MCF 10A (cell line): ENCODE measurements at regions of chr11 and their contacts with region 1.

Region 1: DNA sequence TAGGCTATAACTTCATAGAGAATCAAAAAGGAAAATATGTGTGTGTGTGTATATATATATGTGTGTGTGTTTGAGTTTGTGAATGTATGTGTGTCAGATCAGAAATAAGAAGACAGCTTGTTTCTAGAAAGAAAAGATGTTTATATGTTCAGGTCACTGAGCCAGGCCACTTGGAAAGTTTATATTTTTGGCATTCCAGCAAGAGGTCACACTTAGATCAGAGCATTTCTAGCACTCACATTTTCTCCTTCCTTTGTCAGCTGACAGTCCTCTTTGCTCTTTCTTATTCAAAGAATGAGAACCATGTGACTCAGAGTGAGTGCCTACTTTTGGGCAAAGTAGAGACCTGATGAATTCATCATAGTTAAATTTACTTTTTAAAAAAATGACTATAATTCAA is 22.9 kb downstream of the RAB38 start:
- DNase-seq: no peak
- H3K4me3 Mint-ChIP-seq: no peak overlapping the region
- H3K27ac Mint-ChIP-seq: no peak overlapping the region
- H3K4me1 Mint-ChIP-seq: peaks cover 23% of the 10 kb centered on the region
- H3K27me3 Mint-ChIP-seq: no peaks in the 10 kb centered on the region
- CTCF ChIP-seq: no peak

Region 2: DNA sequence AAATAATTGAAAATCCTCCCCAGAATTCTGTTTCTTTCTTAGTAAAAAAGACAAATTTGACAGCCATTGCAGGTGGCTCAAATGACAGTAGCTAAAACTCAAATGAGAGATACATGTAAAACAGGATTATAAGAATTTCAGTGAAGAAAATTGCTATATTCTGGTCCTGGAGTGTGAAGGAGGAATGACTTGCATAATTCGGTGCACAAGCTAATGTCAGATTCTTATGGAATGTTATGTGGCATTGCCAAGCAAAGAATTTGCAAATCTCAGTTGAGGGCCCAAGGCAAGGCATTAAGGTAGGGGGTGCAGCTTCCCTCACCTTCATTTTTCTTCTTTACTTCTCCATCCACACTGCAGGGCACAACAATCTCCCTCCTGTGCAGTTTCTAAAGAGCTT is 12.5 kb before region 1 on chr11:
- CTCF ChIA-PET with region 1: interaction called, 3 read pairs
- POLR2A ChIA-PET with region 1: interaction called, 14 read pairs
- intact Hi-C with region 1: no loop called
- DNase-seq: no peak
- H3K4me3 Mint-ChIP-seq: no peak overlapping the region
- H3K27ac Mint-ChIP-seq: no peak overlapping the region
- H3K4me1 Mint-ChIP-seq: peaks cover 15% of the 10 kb centered on the region
- H3K27me3 Mint-ChIP-seq: no peaks in the 10 kb centered on the region
- CTCF ChIP-seq: no peak